Left ventricle myocardium superior (tissue), 1 donor: ENCODE measurements at regions of chr5 and their contacts with region 1.

Region 1: DNA sequence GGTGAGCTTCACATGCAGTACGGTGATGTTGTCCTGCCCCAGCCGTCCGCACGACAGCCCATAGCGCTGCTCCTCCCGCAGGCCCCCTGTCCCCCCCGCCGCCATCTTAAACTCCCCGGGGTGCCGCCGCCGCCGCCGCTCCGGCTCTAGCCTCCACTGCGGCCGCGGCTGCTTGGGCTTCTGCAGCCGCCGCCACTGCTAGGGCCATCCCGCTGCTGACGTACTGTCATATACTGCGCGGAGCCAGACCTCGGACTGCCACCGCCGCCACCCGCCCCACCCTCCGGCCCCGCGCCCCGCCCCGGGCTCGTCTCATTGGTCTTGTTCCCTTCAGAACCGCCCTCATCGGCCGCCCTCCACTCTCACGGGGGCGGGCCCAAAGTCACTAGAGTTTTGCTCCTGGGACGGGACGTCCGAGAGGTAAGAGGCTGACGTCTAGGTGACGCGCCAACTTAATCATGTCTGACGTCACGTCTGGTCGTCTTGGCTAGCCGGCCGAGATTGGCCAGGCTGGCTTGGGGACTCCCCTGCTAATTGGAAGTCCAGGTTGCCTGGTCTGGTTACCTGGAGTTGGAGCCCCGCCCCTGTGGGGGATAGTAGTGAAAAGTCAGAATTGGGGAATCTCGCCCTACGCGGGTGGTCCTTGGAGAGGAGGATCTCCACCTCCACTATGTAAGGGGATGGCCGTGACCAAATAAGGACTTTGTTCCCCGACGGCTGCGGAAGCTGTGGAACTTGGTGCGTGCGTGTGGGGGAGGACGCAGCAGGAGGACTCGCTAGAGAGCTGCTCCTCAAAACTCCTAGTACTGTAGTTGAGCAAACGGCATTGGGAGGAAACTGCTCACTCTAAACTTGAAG is at the start of gene ELL2:
- DNase-seq: peak; percentile 98
- ATAC-seq: peak; percentile 91
- total RNA-seq, gene ELL2: 23.4 TPM

Region 2: DNA sequence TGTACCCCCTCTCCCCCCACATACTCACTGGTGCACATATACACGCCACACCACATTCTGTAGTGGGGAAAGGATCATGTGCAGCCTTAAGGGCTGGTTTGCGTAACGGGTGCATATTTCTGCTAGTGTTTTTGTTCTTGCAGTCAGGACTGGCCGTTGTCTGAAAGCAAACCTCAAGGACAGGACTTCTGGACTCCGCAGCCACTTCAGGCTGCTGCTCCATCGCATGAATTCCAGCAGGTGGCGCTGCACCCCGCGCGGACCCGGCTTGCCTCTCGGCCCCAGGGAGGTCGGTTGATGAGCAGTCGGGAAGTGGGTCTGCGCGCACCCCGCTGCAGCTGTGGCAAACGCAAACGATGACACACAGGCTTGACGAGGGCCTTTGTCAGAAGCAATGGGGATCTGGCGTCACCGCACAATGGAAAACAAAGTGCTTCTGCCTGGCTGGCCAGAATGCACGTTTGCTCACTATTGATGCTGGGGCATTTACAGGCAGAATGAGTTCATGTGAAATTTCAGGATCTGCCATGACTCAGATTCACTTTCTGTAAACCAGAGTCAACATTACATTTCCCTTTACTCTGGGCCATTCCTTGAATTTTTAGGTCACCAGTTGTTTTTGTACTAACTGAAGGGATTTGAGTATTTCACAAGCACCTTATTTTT is 103.1 kb before region 1 on chr5:
- intact Hi-C with region 1: loop called (anchors 10 kb)
- DNase-seq: peak; percentile 92
- ATAC-seq: peak; percentile 73

Region 3: DNA sequence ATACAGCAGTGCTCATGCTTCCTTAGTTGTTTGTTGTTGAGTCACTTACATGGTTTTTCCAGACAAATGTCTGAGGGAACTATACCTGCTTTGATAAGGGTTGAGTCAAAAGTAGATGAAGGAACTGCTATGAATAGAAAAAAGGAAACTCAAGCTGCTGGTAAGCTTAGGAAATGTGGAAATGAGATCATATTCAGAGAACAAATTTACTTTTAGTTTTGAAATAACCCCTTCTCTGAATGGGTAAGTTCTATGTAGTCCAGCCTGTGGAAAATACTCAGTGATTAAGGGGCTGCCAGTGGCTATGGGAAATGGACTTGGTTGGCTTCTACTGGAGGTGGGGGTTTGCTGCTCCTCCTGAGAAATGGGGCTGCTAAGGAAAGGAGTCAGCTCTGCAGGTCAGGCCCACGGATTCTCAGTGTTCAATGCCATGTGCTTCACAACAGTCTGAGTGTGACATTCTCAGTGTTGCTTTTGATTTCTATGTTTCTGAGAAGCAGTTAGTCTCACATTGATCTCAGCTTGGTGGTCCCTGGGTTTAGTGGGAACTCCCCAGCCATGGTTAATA is 91.7 kb before region 1 on chr5:
- intact Hi-C with region 1: no loop called
- DNase-seq: no peak
- ATAC-seq: peak; percentile 44

Region 4: DNA sequence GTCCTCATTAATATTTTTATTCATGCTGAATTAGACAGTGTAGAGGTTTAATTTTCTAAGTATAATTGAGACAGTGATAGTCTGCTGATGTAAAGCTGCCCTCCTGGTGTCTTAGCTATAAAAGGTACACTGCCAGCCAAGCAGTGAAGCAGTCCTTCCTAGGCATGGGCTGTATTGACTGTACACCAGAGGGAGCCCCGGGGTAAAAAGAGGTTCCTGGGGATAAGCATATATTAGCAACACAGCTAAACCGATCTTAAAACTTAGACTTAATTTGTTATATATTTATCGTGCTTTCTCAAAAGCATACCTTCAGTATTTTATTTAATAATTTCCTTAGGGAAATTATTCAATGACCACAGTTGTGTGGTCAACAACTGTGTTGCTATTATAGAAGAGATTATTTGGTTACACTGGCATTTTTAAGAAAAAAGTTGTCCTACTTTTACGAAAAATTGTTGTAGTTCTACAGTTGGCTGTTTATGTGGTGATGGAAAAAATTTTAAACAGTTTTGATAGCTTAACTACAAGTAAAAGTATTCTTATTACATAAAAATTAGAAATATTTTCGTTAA is 69.0 kb before region 1 on chr5:
- intact Hi-C with region 1: loop called (anchors 10 kb)
- DNase-seq: no peak
- ATAC-seq: peak; percentile 60

Region 5: GRCh38 chr5:96336351-96336985 is 374.6 kb after region 1 on chr5:
- intact Hi-C with region 1: loop called (anchors 10 kb)
- DNase-seq: no peak
- ATAC-seq: peak; percentile 74